PC-3 (cell line): ENCODE measurements at regions of chr17 and their contacts with region 1.

Region 1: DNA sequence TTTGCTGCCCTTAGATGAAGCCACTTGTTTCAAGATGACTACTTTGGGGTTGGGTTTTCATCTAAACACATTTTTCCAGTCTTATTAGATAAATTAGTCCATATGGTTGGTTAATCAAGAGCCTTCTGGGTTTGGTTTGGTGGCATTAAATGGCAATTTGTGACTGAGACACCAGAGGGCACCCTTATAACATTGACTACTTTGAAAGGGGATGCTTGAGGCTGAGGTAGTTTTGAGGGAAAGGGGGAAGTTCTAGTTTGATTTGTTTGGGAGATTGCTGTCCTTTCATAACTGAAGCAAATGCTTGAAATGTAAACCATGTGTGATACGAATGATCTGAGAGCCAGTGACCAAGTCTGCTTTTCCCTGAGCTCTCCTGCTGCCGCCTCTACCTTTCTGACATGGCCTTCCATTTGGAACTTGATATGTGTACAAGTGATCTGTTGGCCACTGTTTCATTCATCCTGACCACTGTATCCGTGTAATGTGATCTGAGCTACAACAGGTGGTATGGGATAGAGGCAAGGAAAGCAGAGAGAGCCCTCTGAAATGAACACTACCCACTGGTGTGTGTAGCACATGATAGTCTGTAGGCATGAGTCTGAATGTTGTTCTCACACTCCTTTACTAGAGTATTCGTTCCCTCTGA is 5.8 kb upstream of the RARA start:
- DNase-seq: peak; percentile 65
- ATAC-seq: peak; percentile 37; the same call in 1 of the 2 replicates
- H3K4me3 ChIP-seq: no peak overlapping the region
- H3K27ac ChIP-seq: no peak overlapping the region
- H3K4me1 ChIP-seq: peaks cover 10% of the 10 kb centered on the region
- H3K27me3 ChIP-seq: no peaks in the 10 kb centered on the region
- CTCF ChIP-seq: peak; percentile 72

Region 2: DNA sequence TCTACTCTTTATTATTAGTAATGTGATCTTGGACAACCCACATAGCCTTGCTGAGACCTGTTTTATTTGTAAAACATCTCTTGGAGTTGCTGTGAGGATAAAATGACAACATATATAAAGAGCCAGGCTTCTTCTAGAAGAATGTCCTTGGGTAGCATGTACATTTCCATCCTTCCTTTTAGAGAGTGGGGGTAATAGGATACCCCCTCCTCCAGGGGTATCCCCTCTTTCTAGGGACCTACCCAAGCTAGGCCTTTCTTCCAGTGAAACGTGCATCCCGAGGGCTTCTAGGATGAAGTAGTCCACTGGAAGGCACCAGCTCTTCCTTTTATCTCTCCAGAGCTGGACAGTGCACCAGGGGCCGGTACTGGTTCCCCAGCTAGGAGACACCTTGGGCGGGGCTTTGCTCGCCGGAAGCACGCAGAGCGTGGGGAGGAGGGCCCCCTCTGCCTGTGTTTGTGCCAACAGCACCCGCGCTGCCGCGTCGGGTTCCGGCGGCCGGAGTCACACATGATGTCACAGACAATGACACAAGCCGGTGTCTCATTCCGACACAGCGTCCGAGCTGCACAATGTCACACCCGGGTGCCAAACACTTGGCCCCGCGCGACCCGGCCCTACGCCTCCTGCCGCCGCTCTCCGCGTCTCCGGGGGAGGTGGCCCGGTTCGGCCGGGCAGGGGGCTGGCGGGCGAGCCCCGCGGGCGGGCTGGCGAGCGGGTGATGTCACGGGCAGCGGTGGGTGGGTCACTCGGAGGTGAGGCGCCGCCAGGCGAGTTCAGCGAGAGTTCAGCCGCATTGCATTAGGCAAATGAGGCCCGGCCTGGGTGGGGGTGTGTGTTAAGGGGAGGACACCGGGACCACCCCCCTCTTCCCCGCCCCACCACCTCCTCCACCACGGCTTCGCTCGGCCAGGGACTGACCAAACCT is 38.0 kb after region 1 on chr17:
- CTCF ChIA-PET with region 1: no interaction called
- POLR2A ChIA-PET with region 1: no interaction called
- intact Hi-C with region 1: loop called (anchors 5 kb)
- DNase-seq: peak; percentile 74
- ATAC-seq: peak; percentile 73
- H3K4me3 ChIP-seq: peak overlapping the region; percentile 78
- H3K27ac ChIP-seq: peak overlapping the region; percentile 61
- H3K4me1 ChIP-seq: peaks cover 7% of the 10 kb centered on the region
- H3K27me3 ChIP-seq: no peaks in the 10 kb centered on the region
- CTCF ChIP-seq: no peak

Region 3: DNA sequence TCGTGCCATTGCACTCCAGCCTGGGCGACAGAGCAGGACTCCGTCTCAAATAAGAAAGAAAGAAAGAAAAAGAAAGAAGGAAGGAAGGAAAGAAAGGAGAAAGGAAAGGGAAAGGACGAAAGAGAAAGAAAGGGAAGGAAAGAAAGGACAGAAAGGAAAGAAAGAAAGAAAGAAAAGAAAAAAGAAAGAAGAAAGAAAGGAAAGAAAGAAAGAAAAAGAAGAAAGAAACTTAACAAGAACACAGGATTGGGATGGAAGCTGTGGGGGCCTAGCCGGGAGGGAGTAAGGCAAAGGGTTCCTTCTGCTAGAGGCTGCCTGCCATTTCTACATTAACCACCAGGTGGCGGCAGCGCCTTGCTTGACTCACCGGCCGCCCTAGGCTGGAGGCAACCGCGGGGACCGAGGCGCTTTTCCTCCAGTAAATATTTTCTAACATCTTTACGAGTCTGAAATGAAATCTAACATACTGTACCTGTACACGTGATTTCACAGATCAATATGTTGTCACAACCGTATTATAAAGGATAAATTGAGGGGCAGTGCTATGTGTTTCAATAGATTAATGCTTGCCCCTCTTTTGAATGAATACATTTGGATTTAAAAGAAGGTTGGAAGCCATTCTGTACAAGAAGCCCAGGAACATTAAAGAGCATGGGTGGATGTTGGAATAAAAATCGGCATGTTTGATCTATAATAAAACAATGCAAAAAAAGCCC is 55.3 kb after region 1 on chr17:
- CTCF ChIA-PET with region 1: interaction called, 7 read pairs
- POLR2A ChIA-PET with region 1: no interaction called
- intact Hi-C with region 1: loop called (anchors 1 kb)
- DNase-seq: peak; percentile 87
- ATAC-seq: peak; percentile 70
- H3K4me3 ChIP-seq: peak overlapping the region; percentile 59
- H3K27ac ChIP-seq: no peak overlapping the region
- H3K4me1 ChIP-seq: no peaks in the 10 kb centered on the region
- H3K27me3 ChIP-seq: no peaks in the 10 kb centered on the region
- CTCF ChIP-seq: peak; percentile 81

Region 4: GRCh38 chr17:40417609-40418427 is 114.7 kb after region 1 on chr17 and contains the start of gene TOP2A:
- CTCF ChIA-PET with region 1: no interaction called
- POLR2A ChIA-PET with region 1: no interaction called
- intact Hi-C with region 1: loop called (anchors 5 kb)
- DNase-seq: peak; percentile 100
- ATAC-seq: peak; percentile 94
- H3K4me3 ChIP-seq: peak within 1 kb of the TSS; percentile 91
- H3K27ac ChIP-seq: peak within 1 kb of the TSS; percentile 61
- H3K4me1 ChIP-seq: peaks cover 14% of the 10 kb centered on the region
- H3K27me3 ChIP-seq: no peaks in the 10 kb centered on the region
- CTCF ChIP-seq: no peak
- total RNA-seq, gene TOP2A: 97.1 and 104 TPM in 2 replicates